Right cardiac atrium (tissue), 5 donors: ENCODE measurements at regions of chr4 and their contacts with region 1.

Region 1: DNA sequence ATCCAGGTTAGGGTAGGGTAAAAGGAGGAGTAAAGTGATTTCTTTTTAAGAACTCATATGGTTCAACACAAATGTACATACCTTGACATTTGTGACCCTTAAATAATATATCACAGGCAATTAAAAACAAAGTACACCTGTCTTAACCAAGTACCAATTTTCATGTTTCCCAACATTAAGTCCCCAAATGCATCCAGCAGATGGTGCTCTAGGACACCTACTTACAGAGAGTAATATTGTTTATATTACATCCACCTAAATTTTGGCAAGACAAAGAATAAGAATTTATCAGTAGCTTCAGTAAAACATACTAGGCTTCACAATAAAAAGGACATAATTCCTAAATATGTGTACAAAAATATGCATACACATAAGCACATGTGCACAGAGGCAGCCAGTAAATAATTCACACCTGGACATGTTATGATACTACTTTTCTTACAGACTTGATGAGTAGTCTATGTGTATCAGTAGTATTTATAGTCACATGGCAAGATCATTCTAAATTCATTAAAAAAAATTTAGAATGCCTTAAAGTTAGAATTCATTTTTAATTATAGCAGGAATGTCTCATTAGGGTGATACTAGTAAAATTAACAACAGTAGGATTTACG is 219.7 kb downstream of the DCLK2 start:
- DNase-seq: peak in 2 of 3 donors; percentile 23 to 36
- ATAC-seq: no peak
- H3K4me3 ChIP-seq: no peak overlapping the region
- H3K27ac ChIP-seq: no peak overlapping the region
- H3K4me1 ChIP-seq: no peaks in the 10 kb centered on the region
- H3K27me3 ChIP-seq: no peaks in the 10 kb centered on the region

Region 2: GRCh38 chr4:150010525-150011126 is 287.3 kb before region 1 on chr4:
- intact Hi-C with region 1: no loop called
- DNase-seq: peak in 1 of 3 donors; percentile 39
- ATAC-seq: peak; percentile 76 to 83
- H3K4me3 ChIP-seq: no peak overlapping the region
- H3K27ac ChIP-seq: no peak overlapping the region
- H3K4me1 ChIP-seq: peaks cover 2% of the 10 kb centered on the region
- H3K27me3 ChIP-seq: no peaks in the 10 kb centered on the region

Region 3: DNA sequence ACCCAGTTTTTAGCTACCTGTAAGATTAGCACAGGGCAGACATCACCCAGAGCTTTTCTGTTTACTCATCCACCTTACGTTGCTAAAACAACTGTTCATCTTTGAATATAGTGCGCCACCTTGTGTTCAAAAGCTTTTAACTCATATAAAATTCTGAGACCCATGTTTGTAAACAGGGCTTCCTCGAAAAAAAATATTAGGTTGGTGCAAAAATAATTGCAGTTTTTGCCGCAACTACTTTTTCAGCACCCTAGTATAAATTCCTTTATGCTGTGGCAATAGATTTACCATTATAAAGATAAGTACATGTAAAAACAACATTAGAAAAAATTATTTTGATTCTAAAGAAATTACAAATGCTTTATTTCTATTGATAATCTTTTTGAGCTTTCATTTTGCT is 569.2 kb after region 1 on chr4:
- intact Hi-C with region 1: loop called (anchors 5 to 10 kb)
- DNase-seq: no peak
- ATAC-seq: peak; percentile 59 to 73
- H3K4me3 ChIP-seq: no peak overlapping the region
- H3K27ac ChIP-seq: no peak overlapping the region
- H3K4me1 ChIP-seq: no peaks in the 10 kb centered on the region
- H3K27me3 ChIP-seq: no peaks in the 10 kb centered on the region